ENCODE measurements at regions of chr5 and their contacts with region 1.

Region 1: DNA sequence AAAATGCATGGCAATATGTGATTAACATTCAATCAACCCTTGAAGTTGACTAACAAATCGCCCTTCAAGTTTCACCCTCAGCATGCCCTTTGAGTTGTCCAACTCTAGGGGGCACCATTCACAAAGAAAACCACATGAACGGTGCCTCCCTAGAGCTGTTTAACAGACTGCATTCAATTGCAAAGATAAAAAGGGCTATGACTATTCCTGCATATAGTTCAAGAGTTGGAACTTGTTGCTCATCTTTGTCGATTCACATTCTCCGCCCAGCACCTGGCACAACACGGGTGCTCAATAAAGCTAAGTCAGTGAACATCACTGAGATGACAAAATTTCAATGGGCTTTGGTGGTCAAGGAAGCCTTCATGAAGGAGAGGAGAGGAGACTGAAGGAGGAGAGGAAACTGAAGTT is 69.6 kb upstream of the SLC30A5 start:
- DNase-seq: peak; percentile 24
- ATAC-seq: peak; percentile 84
- H3K4me3 Mint-ChIP-seq: no peak overlapping the region
- H3K27ac Mint-ChIP-seq: no peak overlapping the region
- H3K4me1 Mint-ChIP-seq: no peaks in the 10 kb centered on the region
- H3K27me3 Mint-ChIP-seq: peaks cover 3% of the 10 kb centered on the region
- CTCF ChIP-seq: peak; percentile 72

Region 2: DNA sequence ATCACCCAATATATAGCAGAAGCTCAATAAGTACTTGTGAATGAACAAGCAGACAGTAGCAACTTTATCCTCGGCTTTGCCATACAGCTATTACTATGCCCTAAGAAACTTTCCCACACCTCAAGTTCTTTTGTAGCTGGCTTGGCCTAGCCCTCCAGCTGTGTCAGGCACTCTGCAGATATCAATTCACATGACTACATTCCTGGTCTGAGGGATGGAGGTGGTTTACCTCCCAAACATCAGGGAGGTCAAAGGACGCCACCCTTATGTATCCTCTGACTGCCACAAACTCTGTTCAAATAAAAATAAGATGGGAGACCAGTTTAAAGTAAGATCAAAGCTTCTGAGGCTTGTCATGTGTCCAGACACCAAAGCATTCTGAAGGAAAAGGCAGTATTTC is 392.4 kb before region 1 on chr5:
- CTCF ChIA-PET with region 1: no interaction called
- POLR2A ChIA-PET with region 1: no interaction called
- intact Hi-C with region 1: no loop called
- DNase-seq: no peak
- ATAC-seq: no peak
- H3K4me3 Mint-ChIP-seq: no peak overlapping the region
- H3K27ac Mint-ChIP-seq: no peak overlapping the region
- H3K4me1 Mint-ChIP-seq: no peaks in the 10 kb centered on the region
- H3K27me3 Mint-ChIP-seq: no peaks in the 10 kb centered on the region
- CTCF ChIP-seq: no peak

Region 3: DNA sequence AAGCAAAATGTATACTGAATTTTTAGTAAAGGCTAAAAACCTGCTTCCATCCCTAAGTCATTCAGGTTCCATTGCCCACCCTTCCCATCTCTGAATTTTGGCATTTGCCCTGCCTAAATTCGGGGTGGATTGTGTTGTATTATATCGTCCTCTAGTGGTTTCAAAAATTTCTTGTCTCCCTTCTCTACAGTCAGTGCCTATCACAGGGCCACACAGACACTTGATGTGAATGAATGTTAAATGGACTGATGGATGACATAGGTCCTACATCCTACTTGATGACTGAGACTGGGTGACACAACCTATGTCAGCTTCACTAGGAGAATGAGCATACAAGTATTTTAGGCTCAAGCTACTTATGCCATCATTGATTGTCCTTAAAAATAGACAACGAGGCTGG is 24.0 kb after region 1 on chr5:
- CTCF ChIA-PET with region 1: interaction called, 12 read pairs
- POLR2A ChIA-PET with region 1: no interaction called
- intact Hi-C with region 1: no loop called
- DNase-seq: no peak
- ATAC-seq: peak; percentile 49
- H3K4me3 Mint-ChIP-seq: no peak overlapping the region
- H3K27ac Mint-ChIP-seq: no peak overlapping the region
- H3K4me1 Mint-ChIP-seq: peaks cover 10% of the 10 kb centered on the region
- H3K27me3 Mint-ChIP-seq: no peaks in the 10 kb centered on the region
- CTCF ChIP-seq: no peak